ENCODE measurements at regions of chr21 and their contacts with region 1.

Region 1: GRCh38 chr21:29164325-29164942 is 34.0 kb downstream of the MAP3K7CL start:
- DNase-seq: no peak
- ATAC-seq: peak; percentile 56

Region 2: GRCh38 chr21:29125191-29125590 is 39.2 kb before region 1 on chr21:
- intact Hi-C with region 1: no loop called
- DNase-seq: no peak
- ATAC-seq: no peak

Region 3: GRCh38 chr21:29145354-29145782 is 19.1 kb before region 1 on chr21:
- intact Hi-C with region 1: no loop called
- DNase-seq: no peak
- ATAC-seq: peak; percentile 66

Region 4: DNA sequence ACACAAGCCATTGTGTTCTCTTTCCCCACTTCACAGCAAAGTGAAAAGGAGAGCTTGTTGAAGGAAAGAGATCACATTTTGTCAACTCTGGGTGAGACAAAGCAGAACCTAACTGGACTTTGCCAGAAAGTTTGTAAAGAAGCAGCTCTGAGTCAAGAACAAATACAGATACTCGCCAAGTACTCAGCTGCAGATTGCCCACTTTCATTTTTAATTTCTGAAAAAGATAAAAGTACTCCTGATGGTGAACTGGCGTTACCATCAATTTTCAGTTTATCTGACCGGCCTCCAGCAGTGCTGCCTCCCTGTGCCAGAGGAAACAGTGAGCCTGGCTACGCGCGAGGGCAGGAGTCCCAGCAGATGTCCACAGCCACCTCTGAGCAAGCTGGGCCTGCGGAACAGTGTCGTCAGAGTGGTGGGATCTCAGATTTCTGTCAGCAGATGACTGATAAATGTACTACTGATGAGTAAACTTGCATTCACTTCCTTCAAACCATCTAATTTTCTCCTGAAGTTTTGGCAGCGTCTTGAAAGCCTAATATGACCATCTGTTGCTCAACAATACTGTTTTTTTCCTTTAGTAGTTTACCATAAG is 178.0 kb after region 1 on chr21:
- intact Hi-C with region 1: loop called (anchors 5 kb)
- DNase-seq: peak; percentile 71
- ATAC-seq: peak; percentile 90